ENCODE measurements at regions of chr12 and their contacts with region 1.

Region 1: GRCh38 chr12:54701940-54702592 is 53.9 kb upstream of the DCD start:
- DNase-seq: no peak
- ATAC-seq: peak; percentile 58
- H3K4me3 Mint-ChIP-seq: no peak overlapping the region
- H3K27ac Mint-ChIP-seq: no peak overlapping the region
- H3K4me1 Mint-ChIP-seq: no peaks in the 10 kb centered on the region
- H3K27me3 Mint-ChIP-seq: no peaks in the 10 kb centered on the region

Region 2: GRCh38 chr12:54723379-54724256 is 21.6 kb after region 1 on chr12:
- CTCF ChIA-PET with region 1: interaction called, 11 read pairs
- POLR2A ChIA-PET with region 1: no interaction called
- intact Hi-C with region 1: no loop called
- DNase-seq: peak; percentile 30
- ATAC-seq: peak; percentile 51
- H3K4me3 Mint-ChIP-seq: no peak overlapping the region
- H3K27ac Mint-ChIP-seq: no peak overlapping the region
- H3K4me1 Mint-ChIP-seq: no peaks in the 10 kb centered on the region
- H3K27me3 Mint-ChIP-seq: peaks cover 3% of the 10 kb centered on the region

Region 3: GRCh38 chr12:54853995-54854566 is 152.0 kb after region 1 on chr12 and contains the start of gene MUCL1:
- CTCF ChIA-PET with region 1: no interaction called
- POLR2A ChIA-PET with region 1: no interaction called
- intact Hi-C with region 1: loop called in 1 of 2 experiments (anchors 5 kb)
- DNase-seq: peak; percentile 82
- ATAC-seq: peak; percentile 95
- H3K4me3 Mint-ChIP-seq: no peak within 1 kb of the TSS
- H3K27ac Mint-ChIP-seq: no peak within 1 kb of the TSS
- H3K4me1 Mint-ChIP-seq: peaks cover 18% of the 10 kb centered on the region
- H3K27me3 Mint-ChIP-seq: no peaks in the 10 kb centered on the region
- total RNA-seq, gene MUCL1: not detected

Region 4: DNA sequence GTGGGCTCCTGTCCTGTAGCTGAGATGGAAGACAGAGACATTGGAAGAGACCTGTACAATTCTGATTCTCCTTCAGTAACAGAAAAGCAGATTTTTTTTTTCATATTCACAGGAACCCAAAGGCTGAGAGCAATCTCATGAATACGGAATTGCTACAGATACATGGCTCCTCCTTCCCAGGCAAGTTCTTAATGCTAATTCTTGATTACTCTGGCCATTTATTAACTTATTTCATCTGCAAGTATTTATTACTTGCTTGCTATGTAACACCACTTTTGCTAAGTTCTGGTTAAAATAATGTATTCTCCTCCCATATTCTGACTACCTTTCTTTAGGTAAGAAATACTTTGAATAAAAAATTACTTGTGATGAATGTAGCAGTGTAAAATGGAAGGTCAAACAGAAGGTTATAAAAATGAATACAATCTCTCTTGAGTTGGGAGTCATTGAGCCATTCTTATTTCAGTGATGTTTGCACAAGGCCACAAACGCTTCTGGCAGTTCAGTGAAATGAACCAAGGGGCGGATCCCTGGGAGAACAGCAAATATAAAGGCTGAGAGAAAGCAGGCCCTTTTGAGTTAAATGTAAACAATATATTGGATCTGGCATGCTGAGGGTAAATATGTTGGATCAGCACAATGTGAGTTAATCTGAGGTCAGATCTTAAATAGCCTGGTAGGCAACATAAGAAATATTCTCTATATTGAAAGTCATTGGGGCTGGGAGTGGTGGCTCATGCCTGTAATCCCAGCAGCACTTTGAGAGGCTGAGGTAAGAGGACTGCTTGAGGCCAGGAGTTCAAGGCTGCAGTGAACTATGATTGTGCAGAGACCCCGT is 189.9 kb after region 1 on chr12:
- CTCF ChIA-PET with region 1: no interaction called
- POLR2A ChIA-PET with region 1: no interaction called
- intact Hi-C with region 1: no loop called
- DNase-seq: no peak
- ATAC-seq: no peak
- H3K4me3 Mint-ChIP-seq: no peak overlapping the region
- H3K27ac Mint-ChIP-seq: no peak overlapping the region
- H3K4me1 Mint-ChIP-seq: peaks cover 3% of the 10 kb centered on the region
- H3K27me3 Mint-ChIP-seq: peaks cover 7% of the 10 kb centered on the region

Region 5: DNA sequence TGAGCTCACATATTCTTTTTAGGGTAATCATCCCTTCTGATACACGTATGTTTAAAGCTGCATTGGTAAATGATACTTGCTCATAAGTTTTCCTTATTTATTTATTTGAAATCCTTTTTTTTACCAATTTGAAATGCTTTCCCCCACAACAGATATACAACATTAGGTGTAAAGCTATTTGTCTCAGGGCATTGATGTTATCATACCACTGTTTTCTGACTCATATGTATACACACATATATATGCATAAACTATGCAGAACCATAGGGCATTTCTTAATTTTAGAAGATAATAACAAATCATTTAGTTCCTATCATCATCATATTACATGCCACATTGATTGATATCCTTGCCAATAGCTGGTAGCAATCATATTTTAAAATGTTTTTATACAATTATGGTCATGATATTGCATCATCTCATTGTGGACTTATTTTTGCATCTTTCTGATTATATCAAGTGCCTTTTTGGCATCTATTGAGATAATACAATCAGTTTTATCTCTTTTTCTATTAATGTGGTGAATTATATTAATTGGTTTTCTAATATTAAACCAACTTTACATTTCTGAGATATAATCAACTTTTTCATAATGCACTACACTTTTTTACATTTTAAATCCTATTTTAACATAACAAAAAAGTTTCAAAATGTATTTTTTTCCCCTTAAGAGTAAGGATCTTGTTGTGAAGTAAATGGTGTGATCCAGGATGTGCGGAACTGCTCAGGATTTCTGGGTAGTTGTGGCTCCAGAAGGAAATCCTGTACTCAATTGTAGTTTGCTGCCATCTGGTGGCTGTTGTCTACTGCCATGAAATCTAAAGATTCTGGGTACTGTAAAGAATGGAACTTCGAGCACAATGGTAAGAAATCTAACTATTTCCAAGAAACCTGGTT is 440.9 kb after region 1 on chr12:
- CTCF ChIA-PET with region 1: interaction called, 8 read pairs
- POLR2A ChIA-PET with region 1: no interaction called
- intact Hi-C with region 1: loop called (anchors 2 to 10 kb)
- DNase-seq: peak; percentile 66
- ATAC-seq: no peak
- H3K4me3 Mint-ChIP-seq: no peak overlapping the region
- H3K27ac Mint-ChIP-seq: no peak overlapping the region
- H3K4me1 Mint-ChIP-seq: peaks cover 4% of the 10 kb centered on the region
- H3K27me3 Mint-ChIP-seq: peaks cover 9% of the 10 kb centered on the region

Measured in activated CD4-positive, alpha-beta T cell treated with anti-CD3 and anti-CD28 coated beads for 36 hours (primary cell).